ENCODE measurements at regions of chr18 and their contacts with region 1.

Region 1: GRCh38 chr18:6885992-6886796 is 156.7 kb downstream of the ARHGAP28 start:
- ATAC-seq: peak; percentile 42 to 81 (median 69)
- H3K4me3 ChIP-seq: no peak overlapping the region
- H3K27ac ChIP-seq: no peak overlapping the region
- H3K4me1 ChIP-seq: peaks cover 0 to 8% of the 10 kb centered on the region in 2 donors

Region 2: GRCh38 chr18:5868218-5869115 is 1017.7 kb before region 1 on chr18:
- in situ Hi-C with region 1: loop called in 1 of 9 experiments (anchors 25 kb)
- ATAC-seq: peak; percentile 56 to 99 (median 78)
- H3K4me3 ChIP-seq: no peak overlapping the region
- H3K27ac ChIP-seq: no peak overlapping the region
- H3K4me1 ChIP-seq: no peaks in the 10 kb centered on the region

Region 3: GRCh38 chr18:5884375-5884774 is 1001.8 kb before region 1 on chr18:
- in situ Hi-C with region 1: loop called in 5 of 9 experiments (anchors 10 to 25 kb)
- ATAC-seq: no peak
- H3K4me3 ChIP-seq: no peak overlapping the region
- H3K27ac ChIP-seq: no peak overlapping the region
- H3K4me1 ChIP-seq: no peaks in the 10 kb centered on the region

Region 4: DNA sequence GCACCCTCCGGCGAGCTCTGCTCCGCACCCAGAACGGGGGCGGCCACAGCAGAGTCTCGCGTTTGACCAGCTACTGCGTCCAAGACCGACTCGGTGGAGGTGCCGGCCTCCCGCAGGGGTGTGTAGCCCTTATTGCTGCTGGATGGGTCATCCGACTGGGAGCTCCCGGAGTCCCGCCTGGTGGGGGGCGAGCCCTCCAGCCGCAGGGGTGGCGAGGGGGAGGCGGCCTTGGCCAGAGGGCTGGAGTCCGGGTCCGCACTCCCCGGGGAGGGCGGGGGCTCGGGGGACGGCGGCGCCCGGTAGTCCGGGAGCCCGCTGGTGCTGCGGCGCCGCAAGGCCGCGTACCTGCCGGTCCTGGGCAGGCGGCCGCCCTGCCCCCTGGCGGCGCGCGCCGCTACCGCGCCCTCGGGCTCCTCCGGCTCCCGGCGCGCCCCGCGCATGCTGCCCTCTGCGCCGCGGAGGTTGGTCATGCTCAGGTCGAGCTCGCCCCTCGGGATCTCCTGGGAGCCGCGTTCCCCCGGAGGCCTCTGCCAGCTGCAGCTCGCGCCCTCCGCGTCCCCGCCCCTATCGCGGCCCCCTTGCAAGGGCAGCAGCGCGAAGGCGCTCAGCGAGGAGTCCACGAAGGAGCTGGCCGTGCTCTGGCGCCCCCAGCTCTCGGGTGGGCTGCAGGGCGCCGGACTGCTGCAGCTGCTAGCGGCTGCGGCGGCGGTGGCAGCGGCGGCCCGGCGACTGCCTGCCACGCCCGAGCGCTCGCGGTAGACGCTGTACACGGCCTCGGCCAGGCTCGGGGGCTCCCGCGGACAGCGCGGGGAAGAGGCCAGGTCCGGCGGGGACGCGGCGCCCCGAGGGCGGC is 995.6 kb before region 1 on chr18:
- in situ Hi-C with region 1: loop called in 5 of 9 experiments (anchors 10 to 25 kb)
- ATAC-seq: peak in 7 of 8 experiments; percentile 5 to 64 (median 34)
- H3K4me3 ChIP-seq: peak overlapping the region in 2 of 5 donors; percentile 11 to 20
- H3K27ac ChIP-seq: no peak overlapping the region
- H3K4me1 ChIP-seq: peaks cover 14 to 15% of the 10 kb centered on the region in 2 donors

Region 5: DNA sequence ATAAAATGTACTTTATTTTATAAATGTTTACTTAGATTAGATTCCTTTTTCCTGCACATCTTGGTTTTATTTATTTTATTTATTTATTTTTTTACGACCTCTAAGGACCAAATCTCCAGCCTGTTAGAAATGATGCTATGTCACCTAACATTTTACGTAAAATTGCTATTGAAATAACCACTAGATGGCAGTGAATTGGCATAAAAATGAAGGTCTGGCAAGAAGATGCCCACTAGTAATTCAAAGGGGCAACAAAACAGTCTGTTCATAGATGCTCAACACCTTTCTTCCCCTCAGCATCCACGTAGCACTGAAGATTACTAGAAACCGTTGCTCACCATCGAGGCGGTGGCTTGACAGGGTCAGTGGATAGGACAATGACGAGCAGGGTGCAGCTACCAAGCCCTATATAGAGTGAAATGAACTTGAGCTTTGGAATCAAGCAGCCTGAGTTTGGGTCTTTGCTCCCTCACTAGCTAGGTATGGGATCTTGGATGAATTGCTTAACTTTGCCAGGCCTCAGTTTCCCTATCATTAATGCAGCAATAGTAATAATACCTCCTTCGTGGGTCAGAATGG is 342.8 kb before region 1 on chr18:
- in situ Hi-C with region 1: loop called in 8 of 9 experiments (anchors 10 to 25 kb)
- ATAC-seq: peak in 4 of 8 experiments; percentile 37 to 83 (median 47)
- H3K4me3 ChIP-seq: no peak overlapping the region
- H3K27ac ChIP-seq: no peak overlapping the region
- H3K4me1 ChIP-seq: no peaks in the 10 kb centered on the region

Region 6: GRCh38 chr18:6561420-6561861 is 324.8 kb before region 1 on chr18:
- in situ Hi-C with region 1: loop called in 1 of 9 experiments (anchors 10 kb)
- ATAC-seq: peak in 5 of 8 experiments; percentile 31 to 43 (median 39)
- H3K4me3 ChIP-seq: no peak overlapping the region
- H3K27ac ChIP-seq: no peak overlapping the region
- H3K4me1 ChIP-seq: peaks cover 9 to 17% of the 10 kb centered on the region in 2 donors

Region 7: DNA sequence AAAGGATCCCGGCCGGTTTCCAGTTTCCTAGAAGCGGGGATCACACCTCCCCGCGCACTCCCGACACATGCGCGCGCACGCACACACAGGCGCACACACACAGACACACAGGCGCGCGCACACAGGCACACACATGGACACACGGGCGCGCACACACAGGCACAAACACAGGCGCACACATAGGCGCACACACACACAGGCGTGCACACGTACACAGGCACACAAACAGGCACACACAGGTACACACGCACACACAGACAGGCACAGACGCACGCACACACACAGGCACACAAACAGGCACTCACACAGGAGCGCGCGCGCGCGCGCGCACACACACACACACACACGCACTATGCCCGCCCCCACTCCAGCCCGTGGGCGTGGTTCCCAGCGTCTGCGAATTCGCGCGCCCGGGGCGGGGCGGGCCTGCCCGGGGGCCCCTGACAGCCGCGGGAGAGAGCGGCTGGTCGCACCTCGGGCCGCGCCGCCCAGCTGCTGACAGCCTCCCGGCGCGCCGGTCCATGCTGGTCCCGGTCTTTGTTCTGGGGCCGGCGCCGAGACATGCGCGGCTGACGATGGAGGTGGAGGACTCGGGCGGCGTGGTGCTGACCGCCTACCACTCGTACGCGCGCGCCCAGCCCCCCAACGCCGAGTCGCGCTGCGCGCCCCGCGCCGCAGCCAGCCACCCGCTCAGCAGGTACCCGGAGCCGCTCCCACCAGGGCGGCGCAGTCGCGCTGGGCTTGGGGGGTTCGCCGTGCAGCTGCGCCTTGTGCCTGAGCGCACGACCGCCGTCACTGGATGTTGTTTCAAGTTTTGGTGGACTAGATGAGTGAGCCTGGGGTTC is 156.7 kb before region 1 on chr18 and contains the start of gene ARHGAP28:
- in situ Hi-C with region 1: loop called in 1 of 9 experiments (anchors 25 kb)
- ATAC-seq: peak; percentile 92 to 95 (median 94)
- H3K4me3 ChIP-seq: peak within 1 kb of the TSS; percentile 39 to 51 (median 44)
- H3K27ac ChIP-seq: peak within 1 kb of the TSS; percentile 71 to 72
- H3K4me1 ChIP-seq: peaks cover 6 to 25% of the 10 kb centered on the region in 2 donors
- total RNA-seq, gene ARHGAP28: 5.4 to 19.4 (median 9.8) TPM